Colonic mucosa (tissue), 4 donors: ENCODE measurements at regions of chr12 and their contacts with region 1.

Region 1: GRCh38 chr12:27743601-27744000 is 33.0 kb downstream of the MRPS35 start:
- DNase-seq: no peak
- H3K4me3 ChIP-seq: no peak overlapping the region
- H3K27ac ChIP-seq: no peak overlapping the region
- H3K4me1 ChIP-seq: no peaks in the 10 kb centered on the region
- H3K27me3 ChIP-seq: no peaks in the 10 kb centered on the region
- CTCF ChIP-seq: no peak

Region 2: DNA sequence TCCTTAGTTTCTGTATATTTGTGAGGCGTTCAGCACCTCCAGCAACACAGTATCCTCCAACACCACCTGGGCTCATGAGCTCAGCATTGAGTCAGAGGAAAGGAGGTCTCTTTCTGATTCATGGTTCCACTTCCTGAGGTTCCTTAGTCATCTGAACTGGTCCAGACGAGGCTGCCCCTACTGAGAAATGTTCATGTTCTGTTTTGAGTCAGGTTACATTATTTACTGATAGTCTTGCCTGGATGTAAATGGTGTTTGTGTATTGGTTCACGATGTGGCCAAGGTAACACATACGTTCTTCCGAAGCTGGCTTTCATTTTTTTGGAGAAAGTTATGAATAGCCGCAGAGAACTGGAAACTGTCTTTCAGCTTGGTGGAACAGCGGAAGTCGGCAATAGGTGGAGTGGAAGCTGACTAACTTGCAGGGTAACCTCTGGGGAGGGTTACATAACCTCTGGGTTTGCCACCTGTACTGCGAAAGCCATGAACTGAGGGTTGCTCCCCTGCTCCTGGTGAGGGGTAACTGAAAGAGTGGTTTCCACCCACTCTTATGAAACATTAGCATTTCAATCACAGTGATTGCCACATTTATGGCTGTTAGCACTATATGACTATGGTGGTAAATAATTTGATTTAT is 78.6 kb after region 1 on chr12:
- intact Hi-C with region 1: loop called (anchors 5 kb)
- DNase-seq: no peak
- H3K4me3 ChIP-seq: no peak overlapping the region
- H3K27ac ChIP-seq: no peak overlapping the region
- H3K4me1 ChIP-seq: no peaks in the 10 kb centered on the region
- H3K27me3 ChIP-seq: no peaks in the 10 kb centered on the region
- CTCF ChIP-seq: no peak

Region 3: GRCh38 chr12:28258998-28259397 is 515.4 kb after region 1 on chr12:
- intact Hi-C with region 1: no loop called
- DNase-seq: no peak
- H3K4me3 ChIP-seq: no peak overlapping the region
- H3K27ac ChIP-seq: no peak overlapping the region
- H3K4me1 ChIP-seq: no peaks in the 10 kb centered on the region
- H3K27me3 ChIP-seq: no peaks in the 10 kb centered on the region
- CTCF ChIP-seq: no peak